GM10248 (cell line): ENCODE measurements at regions of chr6 and their contacts with region 1.

Region 1: GRCh38 chr6:46848684-46849360 is 55.6 kb downstream of the MEP1A start:
- DNase-seq: peak; percentile 72
- CTCF ChIP-seq: peak; percentile 94

Region 2: GRCh38 chr6:46734867-46735719 is 113.7 kb before region 1 on chr6 and contains the start of gene PLA2G7:
- CTCF ChIA-PET with region 1: no interaction called
- POLR2A ChIA-PET with region 1: no interaction called
- DNase-seq: no peak
- CTCF ChIP-seq: no peak

Region 3: DNA sequence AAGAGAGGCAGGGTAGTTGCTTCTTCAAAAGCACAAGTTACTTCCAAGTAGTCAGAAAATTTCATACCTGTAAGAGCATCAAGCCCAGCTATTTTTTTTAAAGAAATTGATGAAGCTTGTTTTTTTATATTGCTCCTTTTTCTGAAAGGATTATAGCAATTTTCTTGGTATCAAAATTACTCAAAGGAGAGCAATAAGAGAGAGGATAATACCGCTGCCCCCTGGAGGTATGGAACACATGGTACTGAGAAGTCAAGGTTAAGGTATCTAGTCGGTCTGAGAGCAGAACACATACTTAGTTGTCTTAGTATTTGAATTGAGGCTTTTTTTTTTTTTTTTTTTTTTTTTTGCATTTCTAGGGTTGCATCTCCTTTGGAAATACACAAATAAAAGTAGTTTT is 13.6 kb after region 1 on chr6:
- CTCF ChIA-PET with region 1: interaction called, 14 read pairs
- POLR2A ChIA-PET with region 1: no interaction called
- DNase-seq: no peak
- CTCF ChIP-seq: no peak

Region 4: DNA sequence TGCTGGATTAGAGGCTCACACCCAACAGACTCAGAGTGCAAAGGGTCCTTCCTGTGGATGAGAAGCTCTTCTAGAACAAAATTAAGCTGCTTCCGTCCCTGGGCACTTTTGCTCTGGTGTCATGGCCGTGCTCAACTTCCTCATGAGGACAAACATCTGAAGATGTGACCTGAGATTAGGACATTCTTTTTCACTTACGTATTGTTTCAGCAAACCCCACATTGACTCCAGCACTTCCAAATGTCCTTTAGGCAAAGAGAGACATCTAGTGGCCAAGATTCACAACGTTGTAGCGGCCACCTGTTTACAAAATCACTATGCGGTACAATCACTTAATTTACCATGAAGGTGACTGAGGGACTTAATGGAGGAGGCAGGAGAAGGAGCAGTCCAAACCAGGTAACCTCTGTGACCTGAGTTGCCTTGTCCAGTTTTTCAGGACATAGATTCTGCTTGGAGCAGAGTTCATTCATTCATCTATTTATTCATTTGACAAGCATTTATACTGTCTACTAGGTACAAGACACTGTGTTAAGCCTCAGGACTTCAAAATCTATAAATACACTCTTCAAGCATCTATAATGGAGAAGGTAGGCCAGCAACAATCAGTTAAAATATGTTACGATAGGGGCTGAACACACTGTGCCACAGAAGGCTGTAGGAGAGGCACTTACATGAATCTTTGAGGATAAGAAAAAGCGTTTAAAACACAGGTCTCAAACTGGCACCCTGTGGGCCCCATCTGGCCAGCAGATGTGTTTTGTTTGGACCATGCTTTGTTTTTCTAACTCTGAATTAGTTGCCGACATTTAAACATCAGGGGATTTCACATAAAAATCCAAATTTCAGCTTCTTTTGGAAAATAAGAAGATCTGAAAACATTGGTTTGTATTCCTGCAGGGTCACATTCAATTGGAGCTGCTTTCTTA is 198.9 kb after region 1 on chr6:
- CTCF ChIA-PET with region 1: interaction called, 16 read pairs
- POLR2A ChIA-PET with region 1: no interaction called
- DNase-seq: peak; percentile 36
- CTCF ChIP-seq: peak; percentile 70

Region 5: GRCh38 chr6:47309291-47310130 is 460.7 kb after region 1 on chr6 and contains the start of gene TNFRSF21:
- CTCF ChIA-PET with region 1: interaction called, 10 read pairs
- POLR2A ChIA-PET with region 1: no interaction called
- DNase-seq: peak; percentile 91
- CTCF ChIP-seq: peak; percentile 91